ENCODE measurements at regions of chr17 and their contacts with region 1.

Region 1: GRCh38 chr17:76523084-76524037 is 14.1 kb downstream of the CYGB start:
- DNase-seq: peak; percentile 88
- ATAC-seq: peak; percentile 38

Region 2: GRCh38 chr17:76384222-76384986 is 139.0 kb before region 1 on chr17 and contains the start of gene SPHK1:
- intact Hi-C with region 1: no loop called
- DNase-seq: peak; percentile 86
- ATAC-seq: peak; percentile 88
- total RNA-seq, gene SPHK1: 2.7 TPM

Region 3: DNA sequence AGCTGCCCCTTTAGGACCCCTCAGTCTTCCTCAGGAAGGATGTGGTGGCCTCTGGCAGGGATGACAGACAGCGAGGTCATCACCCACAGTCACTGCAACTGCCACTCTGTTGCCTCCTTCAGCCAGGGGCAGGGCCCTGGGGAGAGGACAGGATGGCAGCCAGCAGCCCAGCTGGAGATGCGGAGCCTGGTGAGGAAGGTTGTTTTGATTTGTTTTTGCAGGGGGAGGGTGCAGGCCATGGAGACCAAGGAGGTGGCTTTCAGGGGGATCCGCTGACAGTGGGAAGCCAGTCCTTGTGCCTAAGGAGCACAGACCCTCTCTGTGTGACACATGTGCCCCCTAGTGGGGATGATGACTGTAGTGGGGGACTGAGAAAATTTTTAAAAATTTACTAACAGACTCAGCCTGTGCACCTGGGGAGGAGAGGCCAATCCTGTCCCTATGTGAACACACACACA is 23.9 kb after region 1 on chr17:
- intact Hi-C with region 1: loop called (anchors 1 kb)
- DNase-seq: no peak
- ATAC-seq: peak; percentile 58

Region 4: DNA sequence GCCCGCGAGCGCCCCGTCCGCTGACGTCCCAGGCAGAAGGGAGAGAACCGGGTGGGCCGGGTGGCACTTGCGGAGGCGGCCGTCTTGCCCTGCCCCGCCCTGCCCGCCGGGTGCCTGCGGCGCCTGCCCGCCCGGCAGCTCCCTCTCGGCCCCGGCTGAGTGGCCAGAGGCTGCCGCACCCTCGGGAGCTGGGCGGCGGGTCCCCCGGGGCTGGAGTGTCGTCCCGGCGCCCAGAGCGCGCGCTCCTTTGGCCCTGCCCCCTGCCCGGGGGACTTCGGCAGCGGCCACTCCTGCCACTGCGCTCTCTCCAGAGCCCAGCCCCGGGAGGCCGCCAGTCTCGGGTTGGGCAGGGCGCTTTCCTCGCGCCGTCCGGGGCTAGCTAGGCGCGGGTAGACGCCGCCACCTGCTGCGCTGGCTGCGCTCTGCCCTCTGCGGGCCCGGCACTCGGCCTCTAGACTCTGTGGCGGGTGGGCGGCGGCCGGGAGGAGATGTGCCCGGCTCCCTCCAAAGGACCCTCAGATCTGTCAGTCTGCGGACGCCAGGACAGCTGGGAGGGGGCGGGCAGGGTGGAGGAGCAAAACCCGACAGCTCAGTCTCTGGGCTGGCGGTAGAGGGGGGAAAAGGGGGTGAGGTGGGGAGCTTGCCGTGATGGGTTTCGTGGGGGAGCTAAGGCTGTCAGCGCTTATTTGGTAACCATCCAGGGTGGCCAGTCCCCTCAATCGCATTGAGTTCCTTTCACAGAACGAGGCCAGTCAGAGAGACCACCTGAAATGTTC is 62.6 kb after region 1 on chr17 and contains the start of gene ST6GALNAC2:
- intact Hi-C with region 1: loop called (anchors 1 kb)
- DNase-seq: peak; percentile 89
- ATAC-seq: peak; percentile 95
- total RNA-seq, gene ST6GALNAC2: 5.7 TPM

Region 5: GRCh38 chr17:76623271-76624146 is 100.1 kb after region 1 on chr17:
- intact Hi-C with region 1: loop called (anchors 2 kb)
- DNase-seq: peak; percentile 92
- ATAC-seq: peak; percentile 82

Measured in Right ventricle myocardium inferior (tissue), 1 donor.